ENCODE measurements at regions of chr2 and their contacts with region 1.

Region 1: DNA sequence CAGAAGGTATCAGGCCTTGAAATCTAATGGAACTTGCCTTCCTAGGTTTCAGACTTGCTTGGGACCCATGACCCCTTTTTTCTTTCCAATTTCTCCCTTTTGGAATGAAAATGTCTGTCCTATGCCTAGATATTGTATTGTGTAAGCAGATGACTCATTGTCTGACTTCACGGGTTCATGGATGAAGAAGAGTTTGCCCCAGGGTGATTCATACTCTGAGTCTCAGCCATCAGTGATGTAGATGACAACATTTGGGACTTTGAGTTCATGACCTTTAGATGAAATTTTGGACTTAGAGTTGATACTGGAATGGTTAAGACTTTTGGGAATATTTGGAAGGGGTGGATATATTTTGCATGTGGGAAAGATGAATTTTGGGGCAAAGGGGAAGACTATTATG is 11.2 kb upstream of the SCYGR5 start:
- DNase-seq: peak in 2 of 14 experiments; percentile 15 to 19
- ATAC-seq: no peak
- H3K4me3 ChIP-seq: no peak overlapping the region
- H3K4me3 Mint-ChIP-seq: no peak overlapping the region
- H3K27ac ChIP-seq: no peak overlapping the region
- H3K27ac Mint-ChIP-seq: no peak overlapping the region
- H3K4me1 ChIP-seq: peaks cover 2% of the 10 kb centered on the region
- H3K4me1 Mint-ChIP-seq: no peaks in the 10 kb centered on the region
- H3K27me3 ChIP-seq: peaks cover 0 to 7% of the 10 kb centered on the region in 2 experiments
- H3K27me3 Mint-ChIP-seq: peaks cover 4% of the 10 kb centered on the region
- CTCF ChIP-seq: no peak

Region 2: GRCh38 chr2:227608561-227609338 is 46.7 kb before region 1 on chr2:
- CTCF ChIA-PET with region 1: no interaction called
- POLR2A ChIA-PET with region 1: no interaction called
- intact Hi-C with region 1: no loop called
- DNase-seq: peak in 4 of 14 experiments; percentile 5 to 44 (median 34)
- ATAC-seq: no peak
- H3K4me3 ChIP-seq: no peak overlapping the region
- H3K4me3 Mint-ChIP-seq: no peak overlapping the region
- H3K27ac ChIP-seq: no peak overlapping the region
- H3K27ac Mint-ChIP-seq: no peak overlapping the region
- H3K4me1 ChIP-seq: no peaks in the 10 kb centered on the region
- H3K4me1 Mint-ChIP-seq: peaks cover 11% of the 10 kb centered on the region
- H3K27me3 ChIP-seq: peaks cover 0 to 8% of the 10 kb centered on the region in 2 experiments
- H3K27me3 Mint-ChIP-seq: peaks cover 51% of the 10 kb centered on the region
- CTCF ChIP-seq: no peak

Region 3: GRCh38 chr2:227816507-227817274 is 161.2 kb after region 1 on chr2:
- CTCF ChIA-PET with region 1: no interaction called
- POLR2A ChIA-PET with region 1: no interaction called
- intact Hi-C with region 1: no loop called
- DNase-seq: no peak
- ATAC-seq: no peak
- H3K4me3 ChIP-seq: no peak overlapping the region
- H3K4me3 Mint-ChIP-seq: no peak overlapping the region
- H3K27ac ChIP-seq: no peak overlapping the region
- H3K27ac Mint-ChIP-seq: no peak overlapping the region
- H3K4me1 ChIP-seq: peaks cover 26% of the 10 kb centered on the region
- H3K4me1 Mint-ChIP-seq: peaks cover 9% of the 10 kb centered on the region
- H3K27me3 ChIP-seq: no peaks in the 10 kb centered on the region
- H3K27me3 Mint-ChIP-seq: peaks cover 11% of the 10 kb centered on the region
- CTCF ChIP-seq: no peak

Region 4: DNA sequence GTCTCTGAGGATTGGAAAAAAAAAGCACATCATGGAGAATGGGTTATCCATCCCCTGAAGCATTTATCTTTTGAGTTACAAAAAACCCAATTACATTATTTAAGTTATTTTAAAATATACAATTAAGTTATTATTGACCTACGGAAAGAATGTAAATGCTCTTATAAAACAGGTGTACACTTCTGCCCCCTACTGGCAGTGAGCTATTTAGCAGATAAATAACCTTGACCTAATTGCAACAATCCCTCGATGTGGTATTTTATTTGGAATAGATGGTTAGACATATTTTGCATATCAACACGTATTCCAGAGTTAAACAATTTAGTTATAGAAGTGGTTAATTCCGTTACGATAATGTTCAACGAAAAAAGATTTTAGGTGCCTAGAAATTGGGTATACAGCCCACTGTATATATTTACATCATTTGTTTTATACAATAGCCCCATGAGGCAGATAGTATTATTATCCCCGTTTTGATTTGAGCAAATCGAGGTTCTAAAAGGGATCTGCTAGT is 206.8 kb after region 1 on chr2:
- CTCF ChIA-PET with region 1: interaction called, 6 read pairs
- POLR2A ChIA-PET with region 1: no interaction called
- intact Hi-C with region 1: loop called in 1 of 2 experiments (anchors 2 kb)
- DNase-seq: peak in 4 of 14 experiments; percentile 52 to 74 (median 62)
- ATAC-seq: no peak
- H3K4me3 ChIP-seq: no peak overlapping the region
- H3K4me3 Mint-ChIP-seq: no peak overlapping the region
- H3K27ac ChIP-seq: no peak overlapping the region
- H3K27ac Mint-ChIP-seq: no peak overlapping the region
- H3K4me1 ChIP-seq: no peaks in the 10 kb centered on the region
- H3K4me1 Mint-ChIP-seq: no peaks in the 10 kb centered on the region
- H3K27me3 ChIP-seq: no peaks in the 10 kb centered on the region
- H3K27me3 Mint-ChIP-seq: no peaks in the 10 kb centered on the region
- CTCF ChIP-seq: peak; percentile 49

Region 5: GRCh38 chr2:227884511-227884947 is 229.1 kb after region 1 on chr2:
- CTCF ChIA-PET with region 1: no interaction called
- POLR2A ChIA-PET with region 1: no interaction called
- intact Hi-C with region 1: loop called in 1 of 2 experiments (anchors 2 kb)
- DNase-seq: peak; percentile 14 to 74 (median 35)
- ATAC-seq: peak; percentile 58
- H3K4me3 ChIP-seq: no peak overlapping the region
- H3K4me3 Mint-ChIP-seq: no peak overlapping the region
- H3K27ac ChIP-seq: no peak overlapping the region
- H3K27ac Mint-ChIP-seq: no peak overlapping the region
- H3K4me1 ChIP-seq: no peaks in the 10 kb centered on the region
- H3K4me1 Mint-ChIP-seq: no peaks in the 10 kb centered on the region
- H3K27me3 ChIP-seq: no peaks in the 10 kb centered on the region
- H3K27me3 Mint-ChIP-seq: peaks cover 12% of the 10 kb centered on the region
- CTCF ChIP-seq: peak; percentile 51

Measured in CD4-positive, alpha-beta T cell (primary cell).